BJ (cell line): ENCODE measurements at regions of chr15 and their contacts with region 1.

Region 1: GRCh38 chr15:49421991-49422390 is 1.1 kb upstream of the FGF7 start:
- DNase-seq: no peak
- H3K4me3 ChIP-seq: no peak overlapping the region
- H3K27me3 ChIP-seq: no peaks in the 10 kb centered on the region
- CTCF ChIP-seq: peak; percentile 59

Region 2: GRCh38 chr15:49242820-49243219 is 179.2 kb before region 1 on chr15:
- CTCF ChIA-PET with region 1: interaction called, 113 read pairs
- POLR2A ChIA-PET with region 1: interaction called, 5 read pairs
- DNase-seq: no peak
- H3K4me3 ChIP-seq: no peak overlapping the region
- H3K27me3 ChIP-seq: no peaks in the 10 kb centered on the region
- CTCF ChIP-seq: no peak

Region 3: DNA sequence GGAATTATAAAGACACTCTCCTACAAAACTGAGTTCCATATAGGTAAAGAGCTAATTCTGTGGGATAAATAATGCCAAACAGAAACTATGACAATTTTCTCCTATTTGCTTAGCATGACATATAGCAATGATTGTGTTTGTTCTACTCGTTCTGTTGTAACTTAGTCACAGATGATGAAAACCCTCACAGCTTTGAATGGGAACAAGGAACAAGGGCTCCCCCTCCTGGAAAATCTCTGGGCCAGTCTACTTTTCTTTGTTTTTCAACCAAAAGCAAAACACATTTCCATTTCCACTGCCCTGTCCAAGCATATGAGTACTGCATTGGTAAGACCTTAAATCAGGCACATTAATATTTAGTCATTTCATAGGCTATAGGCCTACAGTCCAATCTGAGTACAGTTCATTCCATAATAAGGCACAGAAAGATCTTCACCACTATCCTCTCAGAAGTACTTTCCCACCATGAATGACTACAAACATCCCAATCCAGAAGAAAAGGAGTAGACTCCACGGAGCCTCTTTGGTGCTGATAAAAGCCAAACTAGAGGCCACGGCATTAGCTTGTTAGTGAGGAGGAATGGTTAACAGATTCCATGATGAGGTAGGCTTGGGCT is 629.9 kb after region 1 on chr15:
- CTCF ChIA-PET with region 1: interaction called, 23 read pairs
- POLR2A ChIA-PET with region 1: no interaction called
- DNase-seq: peak; percentile 28
- H3K4me3 ChIP-seq: no peak overlapping the region
- H3K27me3 ChIP-seq: no peaks in the 10 kb centered on the region
- CTCF ChIP-seq: peak; percentile 78